GM10248 (cell line): ENCODE measurements at regions of chr7 and their contacts with region 1.

Region 1: GRCh38 chr7:152120210-152120609 is 94.7 kb downstream of the GALNT11 start:
- DNase-seq: no peak
- CTCF ChIP-seq: no peak

Region 2: DNA sequence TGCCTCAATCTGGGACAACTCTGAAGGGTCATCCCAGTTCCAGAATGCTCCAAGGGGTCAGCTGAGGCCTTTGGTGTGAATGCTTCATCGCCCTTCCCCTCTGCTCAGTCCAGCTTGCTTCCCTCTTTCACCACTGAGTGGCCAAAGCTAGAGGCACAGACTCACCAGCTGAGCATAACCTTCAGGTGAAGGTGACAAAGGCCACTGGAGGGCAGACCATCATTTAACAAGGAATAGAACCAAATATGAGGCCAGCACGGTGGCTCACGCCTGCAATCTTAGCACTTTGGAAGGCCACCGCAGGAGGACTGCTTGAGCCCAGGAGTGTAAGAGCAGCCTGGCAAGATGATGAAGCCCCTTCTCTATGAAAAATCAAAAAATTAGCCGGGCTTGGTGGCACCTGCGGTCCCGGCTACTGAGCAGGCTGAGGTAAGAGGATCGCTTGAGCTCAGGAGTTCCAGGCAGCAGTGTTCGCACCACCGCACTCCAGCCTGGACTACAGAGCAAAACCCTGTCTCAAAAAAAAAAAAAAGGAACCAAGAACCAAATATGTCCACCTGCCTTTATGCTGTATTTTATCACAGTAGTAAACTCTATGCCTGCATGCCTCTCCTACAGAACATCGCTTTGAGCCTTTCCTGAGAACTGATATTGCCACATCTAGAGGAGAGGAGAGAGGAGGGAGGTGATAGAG is 256.7 kb before region 1 on chr7:
- CTCF ChIA-PET with region 1: no interaction called
- POLR2A ChIA-PET with region 1: no interaction called
- DNase-seq: no peak
- CTCF ChIP-seq: peak; percentile 44

Region 3: DNA sequence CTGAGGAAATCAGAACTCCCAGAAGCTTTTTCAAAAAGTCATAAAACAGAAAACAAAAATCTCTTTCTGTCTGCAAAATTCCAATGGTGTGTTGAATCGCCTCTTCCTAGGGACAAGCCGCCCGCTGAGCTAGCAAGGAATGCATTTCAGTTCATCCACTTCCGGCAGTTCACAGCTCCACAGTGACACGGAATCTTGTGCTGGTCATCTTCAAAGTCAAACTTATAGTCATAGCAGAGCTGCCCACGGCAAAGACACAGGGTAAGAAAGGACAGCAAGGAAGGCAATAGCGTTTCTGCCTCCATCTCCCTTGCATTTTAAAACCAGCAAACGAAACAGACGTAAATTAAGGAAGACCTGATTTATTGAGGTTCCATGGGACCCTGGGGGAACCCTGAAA is 16.5 kb after region 1 on chr7:
- CTCF ChIA-PET with region 1: interaction called, 10 read pairs
- POLR2A ChIA-PET with region 1: no interaction called
- DNase-seq: no peak
- CTCF ChIP-seq: no peak

Region 4: GRCh38 chr7:152292898-152293297 is 172.7 kb after region 1 on chr7:
- CTCF ChIA-PET with region 1: no interaction called
- POLR2A ChIA-PET with region 1: no interaction called
- DNase-seq: no peak
- CTCF ChIP-seq: no peak